ENCODE measurements at regions of chr19 and their contacts with region 1.

Region 1: GRCh38 chr19:19618219-19619051 is at the start of gene PBX4:
- DNase-seq: peak; percentile 98 to 100 (median 99)
- ATAC-seq: peak; percentile 96
- H3K4me3 ChIP-seq: peak within 1 kb of the TSS; percentile 70 to 91
- H3K4me3 Mint-ChIP-seq: peak within 1 kb of the TSS; percentile 90
- H3K27ac ChIP-seq: peak within 1 kb of the TSS; percentile 74 to 75
- H3K27ac Mint-ChIP-seq: peak within 1 kb of the TSS; percentile 92
- H3K4me1 ChIP-seq: peaks cover 28% of the 10 kb centered on the region
- H3K4me1 Mint-ChIP-seq: peaks cover 42% of the 10 kb centered on the region
- H3K27me3 ChIP-seq: no peaks in the 10 kb centered on the region
- H3K27me3 Mint-ChIP-seq: no peaks in the 10 kb centered on the region
- CTCF ChIP-seq: no peak
- total RNA-seq, gene PBX4: 44.4 to 48.8 TPM

Region 2: GRCh38 chr19:19562665-19563347 is 55.6 kb before region 1 on chr19:
- CTCF ChIA-PET with region 1: interaction called, 3 read pairs
- POLR2A ChIA-PET with region 1: no interaction called
- intact Hi-C with region 1: loop called in 1 of 2 experiments (anchors 2 kb)
- DNase-seq: peak in 7 of 9 experiments; percentile 22 to 71 (median 62)
- ATAC-seq: peak; percentile 82
- H3K4me3 ChIP-seq: no peak overlapping the region
- H3K4me3 Mint-ChIP-seq: no peak overlapping the region
- H3K27ac ChIP-seq: no peak overlapping the region
- H3K27ac Mint-ChIP-seq: no peak overlapping the region
- H3K4me1 ChIP-seq: peaks cover 8% of the 10 kb centered on the region
- H3K4me1 Mint-ChIP-seq: peaks cover 18% of the 10 kb centered on the region
- H3K27me3 ChIP-seq: no peaks in the 10 kb centered on the region
- H3K27me3 Mint-ChIP-seq: no peaks in the 10 kb centered on the region
- CTCF ChIP-seq: peak; percentile 22

Region 3: DNA sequence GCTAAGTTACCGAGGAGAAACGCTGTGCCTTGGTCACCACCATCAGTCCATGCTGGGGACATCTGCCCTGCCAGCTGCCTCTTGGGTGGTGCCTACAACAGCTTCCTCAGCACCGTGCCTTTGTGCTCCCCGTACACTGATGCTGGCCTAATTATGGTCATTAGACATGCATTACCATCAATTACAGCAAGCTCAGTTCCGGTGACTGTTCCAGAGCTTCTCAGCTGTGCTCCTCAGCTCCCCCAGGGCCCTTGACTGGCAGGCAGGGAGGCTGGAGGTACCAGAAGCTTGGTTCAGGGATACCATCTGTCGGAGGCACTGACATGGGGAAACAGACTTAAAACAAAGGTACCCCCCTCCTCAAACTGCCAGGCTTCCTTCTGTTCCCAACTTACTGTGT is 40.2 kb before region 1 on chr19:
- CTCF ChIA-PET with region 1: no interaction called
- POLR2A ChIA-PET with region 1: no interaction called
- intact Hi-C with region 1: no loop called
- DNase-seq: no peak
- ATAC-seq: no peak
- H3K4me3 ChIP-seq: no peak overlapping the region
- H3K4me3 Mint-ChIP-seq: no peak overlapping the region
- H3K27ac ChIP-seq: no peak overlapping the region
- H3K27ac Mint-ChIP-seq: no peak overlapping the region
- H3K4me1 ChIP-seq: peaks cover 5% of the 10 kb centered on the region
- H3K4me1 Mint-ChIP-seq: peaks cover 12% of the 10 kb centered on the region
- H3K27me3 ChIP-seq: no peaks in the 10 kb centered on the region
- H3K27me3 Mint-ChIP-seq: no peaks in the 10 kb centered on the region
- CTCF ChIP-seq: no peak

Region 4: GRCh38 chr19:19597809-19598306 is 20.6 kb before region 1 on chr19:
- CTCF ChIA-PET with region 1: interaction called, 3 read pairs
- POLR2A ChIA-PET with region 1: interaction called, 6 read pairs
- intact Hi-C with region 1: loop called (anchors 1 kb)
- DNase-seq: peak in 7 of 9 experiments; percentile 22 to 96 (median 62)
- ATAC-seq: peak; percentile 69
- H3K4me3 ChIP-seq: peak overlapping the region in 1 of 2 experiments; percentile 8
- H3K4me3 Mint-ChIP-seq: peak overlapping the region; percentile 37
- H3K27ac ChIP-seq: peak overlapping the region; percentile 94 to 95
- H3K27ac Mint-ChIP-seq: peak overlapping the region; percentile 99
- H3K4me1 ChIP-seq: peaks cover 58% of the 10 kb centered on the region
- H3K4me1 Mint-ChIP-seq: peaks cover 53% of the 10 kb centered on the region
- H3K27me3 ChIP-seq: no peaks in the 10 kb centered on the region
- H3K27me3 Mint-ChIP-seq: no peaks in the 10 kb centered on the region
- CTCF ChIP-seq: no peak

Region 5: DNA sequence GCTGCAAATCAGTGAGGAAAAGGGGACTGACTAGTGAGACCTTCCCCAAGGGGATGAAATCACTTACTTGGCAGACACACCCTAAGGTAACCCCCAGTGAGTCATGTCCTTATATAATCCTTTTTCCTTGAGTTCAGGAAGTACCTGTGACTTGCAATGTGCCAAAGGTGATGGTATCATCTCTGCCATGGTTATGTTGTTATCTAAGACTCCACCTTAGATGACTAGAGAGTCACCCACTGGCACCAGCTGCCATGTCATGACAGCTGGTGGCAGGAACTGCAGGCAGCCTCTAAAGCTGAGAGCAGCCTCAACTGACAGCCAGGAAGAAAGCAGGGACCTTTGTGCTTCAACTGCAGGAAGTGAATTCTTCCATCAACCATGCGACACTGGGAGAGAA is 12.4 kb before region 1 on chr19:
- CTCF ChIA-PET with region 1: interaction called, 3 read pairs
- POLR2A ChIA-PET with region 1: interaction called, 6 read pairs
- intact Hi-C with region 1: loop called in 1 of 2 experiments (anchors 1 kb)
- DNase-seq: peak in 7 of 9 experiments; percentile 39 to 79 (median 65)
- ATAC-seq: peak; percentile 86
- H3K4me3 ChIP-seq: no peak overlapping the region
- H3K4me3 Mint-ChIP-seq: peak overlapping the region; percentile 57
- H3K27ac ChIP-seq: peak overlapping the region; percentile 9 to 53
- H3K27ac Mint-ChIP-seq: peak overlapping the region; percentile 94
- H3K4me1 ChIP-seq: peaks cover 44% of the 10 kb centered on the region
- H3K4me1 Mint-ChIP-seq: peaks cover 66% of the 10 kb centered on the region
- H3K27me3 ChIP-seq: no peaks in the 10 kb centered on the region
- H3K27me3 Mint-ChIP-seq: no peaks in the 10 kb centered on the region
- CTCF ChIP-seq: no peak